ENCODE measurements at regions of chr7 and their contacts with region 1.

Region 1: DNA sequence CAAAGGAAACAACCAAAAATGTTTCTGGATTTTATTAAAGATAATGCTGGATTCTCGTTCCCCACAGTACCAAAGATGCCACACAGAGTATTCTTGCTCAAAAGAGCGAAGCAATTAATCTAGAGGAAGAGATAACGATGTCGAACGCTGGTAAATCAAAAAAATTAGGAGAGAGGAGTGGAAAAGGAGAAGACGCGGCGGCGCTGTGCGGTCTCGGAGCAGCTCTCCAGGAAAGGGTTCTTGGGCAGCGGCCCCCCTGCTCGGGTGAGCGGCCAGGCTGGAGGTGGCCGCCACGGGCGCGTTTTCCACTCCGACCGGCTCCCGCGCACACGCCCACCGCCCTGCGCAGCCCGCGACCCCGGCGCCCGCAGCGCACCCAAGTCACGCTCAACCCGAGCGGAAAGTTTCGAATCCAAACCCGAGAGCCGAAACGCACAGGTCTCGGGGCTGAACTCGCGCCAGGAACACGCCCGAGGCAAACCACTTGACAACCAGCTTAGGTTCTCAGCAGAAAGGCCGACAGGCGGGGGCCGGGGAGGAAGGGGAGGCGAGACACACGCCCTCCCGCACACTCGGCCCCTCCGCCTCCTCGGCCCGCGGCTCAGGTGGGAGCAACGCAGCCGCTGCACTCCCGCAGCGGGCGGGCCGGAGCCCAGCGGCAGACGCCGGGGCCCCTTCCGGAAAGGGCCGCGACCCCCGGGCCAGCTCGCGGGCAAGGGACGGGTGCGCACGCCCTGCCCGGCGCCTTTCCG is 924 bp downstream of the SRPK2 start:
- DNase-seq: peak; percentile 37
- H3K4me3 Mint-ChIP-seq: peak overlapping the region; percentile 88
- H3K27ac Mint-ChIP-seq: peak overlapping the region; percentile 80
- H3K4me1 Mint-ChIP-seq: peaks cover 21% of the 10 kb centered on the region
- H3K27me3 Mint-ChIP-seq: no peaks in the 10 kb centered on the region

Region 2: DNA sequence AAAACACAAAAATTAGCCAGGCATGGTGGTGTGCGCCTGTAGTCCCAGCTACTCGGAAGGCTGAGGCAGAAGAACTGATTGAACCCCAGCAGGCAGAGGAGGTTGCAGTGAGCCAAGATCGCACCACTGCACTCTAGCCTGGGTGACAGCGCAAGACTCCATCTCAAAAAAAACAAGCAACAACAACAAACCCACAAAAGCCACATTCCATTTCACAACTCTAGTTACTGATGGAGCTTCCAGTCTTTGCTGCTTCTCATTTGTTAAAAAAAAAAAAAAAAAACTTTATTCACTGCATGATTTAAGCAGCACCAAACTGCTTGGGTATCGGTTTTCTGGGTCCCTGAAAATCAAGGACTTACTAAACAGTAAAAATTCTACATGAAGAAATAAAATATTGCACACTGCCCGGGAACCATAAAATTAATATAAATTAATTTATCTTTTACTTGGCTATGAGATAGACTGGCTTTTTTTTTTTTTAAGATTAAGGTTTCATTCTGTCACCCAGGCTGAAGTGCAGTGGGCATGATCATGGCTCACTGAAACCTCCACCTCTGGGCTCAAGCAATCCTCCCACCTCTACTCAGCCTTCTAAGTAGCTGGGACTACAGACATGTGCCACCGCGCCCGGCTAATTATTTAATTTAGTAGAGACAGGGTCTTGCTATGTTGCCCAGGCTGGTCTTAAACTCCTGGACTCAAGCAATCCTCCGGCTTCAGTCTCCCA is 41.0 kb before region 1 on chr7:
- intact Hi-C with region 1: loop called (anchors 2 kb)
- DNase-seq: no peak
- H3K4me3 Mint-ChIP-seq: peak overlapping the region; percentile 17
- H3K27ac Mint-ChIP-seq: peak overlapping the region; percentile 47
- H3K4me1 Mint-ChIP-seq: peaks cover 39% of the 10 kb centered on the region
- H3K27me3 Mint-ChIP-seq: no peaks in the 10 kb centered on the region

Region 3: DNA sequence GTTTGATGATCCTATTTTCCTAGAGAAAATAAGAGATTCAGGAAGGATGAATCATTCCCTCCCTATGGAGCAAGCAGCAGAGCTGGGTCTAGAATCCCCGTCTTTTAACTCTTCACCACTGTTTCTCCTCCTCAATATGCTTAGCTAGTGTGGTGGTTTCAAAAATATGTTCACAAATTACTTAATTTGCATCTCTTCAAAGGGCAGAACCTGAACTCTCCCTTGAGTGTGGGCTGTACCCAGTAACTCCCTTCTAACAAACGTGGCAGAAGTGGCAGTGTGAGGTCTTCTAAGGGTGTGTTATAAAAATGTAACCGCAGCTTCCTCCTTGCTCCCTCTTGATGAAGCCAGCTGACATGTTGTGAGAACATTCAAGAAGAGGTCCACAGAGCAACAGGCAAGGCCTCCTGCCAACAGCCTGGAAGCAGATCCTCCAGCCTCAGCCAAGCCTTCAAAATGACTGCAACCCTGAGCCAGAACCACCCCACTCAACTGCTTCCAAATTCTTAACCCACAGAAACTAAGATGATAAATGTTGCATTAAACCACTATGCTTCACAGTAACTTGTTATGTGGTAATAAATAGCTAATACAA is 35.7 kb before region 1 on chr7:
- intact Hi-C with region 1: loop called (anchors 2 kb)
- DNase-seq: peak; percentile 58
- H3K4me3 Mint-ChIP-seq: peak overlapping the region; percentile 51
- H3K27ac Mint-ChIP-seq: peak overlapping the region; percentile 87
- H3K4me1 Mint-ChIP-seq: peaks cover 46% of the 10 kb centered on the region
- H3K27me3 Mint-ChIP-seq: no peaks in the 10 kb centered on the region